ENCODE measurements at regions of chr3 and their contacts with region 1.

Region 1: GRCh38 chr3:32947789-32948238 is 3.6 kb upstream of the CCR4 start:
- DNase-seq: peak; percentile 83
- H3K4me3 Mint-ChIP-seq: no peak overlapping the region
- H3K27ac Mint-ChIP-seq: peak overlapping the region; percentile 53
- H3K4me1 Mint-ChIP-seq: peaks cover 40% of the 10 kb centered on the region
- H3K27me3 Mint-ChIP-seq: no peaks in the 10 kb centered on the region

Region 2: GRCh38 chr3:32781210-32781968 is 166.4 kb before region 1 on chr3:
- intact Hi-C with region 1: no loop called
- DNase-seq: peak; percentile 60
- H3K4me3 Mint-ChIP-seq: peak overlapping the region; percentile 83
- H3K27ac Mint-ChIP-seq: peak overlapping the region; percentile 18
- H3K4me1 Mint-ChIP-seq: peaks cover 3% of the 10 kb centered on the region
- H3K27me3 Mint-ChIP-seq: peaks cover 10% of the 10 kb centered on the region

Region 3: DNA sequence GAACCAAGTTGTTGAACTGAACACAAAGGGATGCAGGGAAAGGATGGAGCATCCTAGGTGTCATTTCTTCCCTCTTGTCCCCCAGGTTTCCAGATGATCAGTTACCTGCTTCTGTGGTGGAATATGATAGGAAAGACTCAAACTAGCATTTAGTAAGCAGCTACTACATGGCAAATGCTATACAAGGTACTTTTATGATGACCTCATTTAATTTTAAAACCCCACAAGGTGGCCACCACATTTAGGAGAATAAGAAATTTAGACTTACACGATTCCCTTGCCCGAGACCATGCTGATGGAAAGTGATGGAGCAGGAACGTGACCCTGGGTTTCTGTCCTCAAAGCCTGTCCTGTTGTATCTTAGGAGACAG is 44.5 kb after region 1 on chr3:
- intact Hi-C with region 1: loop called (anchors 1 kb)
- DNase-seq: no peak
- H3K4me3 Mint-ChIP-seq: peak overlapping the region; percentile 79
- H3K27ac Mint-ChIP-seq: peak overlapping the region; percentile 97
- H3K4me1 Mint-ChIP-seq: peaks cover 73% of the 10 kb centered on the region
- H3K27me3 Mint-ChIP-seq: no peaks in the 10 kb centered on the region

Region 4: DNA sequence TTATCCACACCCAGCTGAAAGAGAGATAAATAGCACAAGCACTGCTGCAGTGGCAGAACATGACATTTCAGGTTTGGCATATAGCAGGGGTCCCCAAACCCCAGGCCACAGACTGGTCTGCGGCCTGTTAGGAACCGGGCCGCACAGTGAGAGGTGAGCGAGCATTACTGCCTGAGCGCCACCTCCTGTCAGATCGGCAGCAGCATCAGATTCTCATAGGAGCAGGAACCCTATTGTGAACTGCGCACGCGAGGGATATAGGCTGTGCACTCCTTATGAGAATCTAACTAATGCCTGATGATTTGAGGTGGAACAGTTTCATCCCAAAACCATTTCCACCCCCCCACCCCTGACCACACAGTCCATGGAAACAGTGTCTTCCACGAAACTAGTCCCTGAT is 58.3 kb after region 1 on chr3:
- intact Hi-C with region 1: loop called (anchors 2 kb)
- DNase-seq: no peak
- H3K4me3 Mint-ChIP-seq: no peak overlapping the region
- H3K27ac Mint-ChIP-seq: peak overlapping the region; percentile 84
- H3K4me1 Mint-ChIP-seq: peaks cover 59% of the 10 kb centered on the region
- H3K27me3 Mint-ChIP-seq: no peaks in the 10 kb centered on the region

Region 5: GRCh38 chr3:33030802-33031201 is 83.0 kb after region 1 on chr3:
- intact Hi-C with region 1: loop called (anchors 1 kb)
- DNase-seq: peak; percentile 30
- H3K4me3 Mint-ChIP-seq: no peak overlapping the region
- H3K27ac Mint-ChIP-seq: peak overlapping the region; percentile 81
- H3K4me1 Mint-ChIP-seq: peaks cover 19% of the 10 kb centered on the region
- H3K27me3 Mint-ChIP-seq: no peaks in the 10 kb centered on the region

Region 6: GRCh38 chr3:33074217-33075067 is 126.6 kb after region 1 on chr3:
- intact Hi-C with region 1: loop called (anchors 1 kb)
- DNase-seq: peak; percentile 51
- H3K4me3 Mint-ChIP-seq: no peak overlapping the region
- H3K27ac Mint-ChIP-seq: peak overlapping the region; percentile 64
- H3K4me1 Mint-ChIP-seq: peaks cover 53% of the 10 kb centered on the region
- H3K27me3 Mint-ChIP-seq: no peaks in the 10 kb centered on the region

Region 7: GRCh38 chr3:33372218-33373081 is 424.6 kb after region 1 on chr3:
- intact Hi-C with region 1: loop called (anchors 1 kb)
- DNase-seq: peak; percentile 23
- H3K4me3 Mint-ChIP-seq: no peak overlapping the region
- H3K27ac Mint-ChIP-seq: no peak overlapping the region
- H3K4me1 Mint-ChIP-seq: peaks cover 6% of the 10 kb centered on the region
- H3K27me3 Mint-ChIP-seq: peaks cover 12% of the 10 kb centered on the region

Measured in activated T-helper 2 cell treated with anti-CD3 and anti-CD28 coated beads, Interferon-gamma antibody, Interleukin-2, Interleukin-4, amounts not matched to agents 10 μg/mL and 5 μg/mL and 100 μg/mL, durations not matched to agents 14 hours and 24 hours and 36 hours (primary cell).